Mammary epithelial cell (primary cell): ENCODE measurements at regions of chr17 and their contacts with region 1.

Region 1: GRCh38 chr17:44636562-44636961 is 19.7 kb upstream of the MEIOC start:
- DNase-seq: peak; percentile 12
- H3K4me3 ChIP-seq: no peak overlapping the region
- H3K27ac ChIP-seq: no peak overlapping the region
- H3K4me1 ChIP-seq: no peaks in the 10 kb centered on the region
- H3K27me3 ChIP-seq: no peaks in the 10 kb centered on the region
- CTCF ChIP-seq: peak; percentile 28 to 54

Region 2: DNA sequence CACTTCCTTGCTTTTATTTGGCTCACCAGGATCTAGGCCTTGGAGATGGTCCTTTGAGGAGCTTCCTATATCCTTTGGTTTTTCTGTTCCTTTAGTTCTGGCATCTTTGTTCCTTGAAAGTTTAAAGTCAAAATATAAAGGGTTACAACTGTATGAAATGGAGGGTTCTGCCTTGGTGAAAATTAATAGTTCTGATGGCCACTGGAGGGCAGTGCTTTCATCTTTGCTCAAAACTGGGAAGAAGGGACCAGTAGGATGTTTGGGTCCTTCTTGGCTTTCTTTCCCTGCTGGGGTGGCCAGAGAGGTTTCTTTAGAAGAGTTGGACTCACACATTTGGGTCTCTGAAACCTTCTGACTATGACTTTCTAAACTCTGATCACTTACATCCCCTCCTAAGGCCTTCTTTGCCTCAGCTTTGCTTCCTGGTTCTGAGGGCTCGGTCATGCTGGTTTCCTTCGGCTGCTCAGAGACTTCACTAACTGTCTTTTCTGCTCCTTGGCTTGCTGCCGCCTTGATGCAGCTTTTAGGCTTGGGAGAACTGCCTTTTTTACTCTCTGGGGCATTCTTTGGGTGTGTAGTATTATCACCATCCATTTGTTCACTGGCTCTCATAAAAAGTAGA is 236.2 kb before region 1 on chr17:
- CTCF ChIA-PET with region 1: no interaction called
- dilution Hi-C with region 1: no loop called
- in situ Hi-C with region 1: loop called in 1 of 2 experiments (anchors 25 kb)
- intact Hi-C with region 1: no loop called
- DNase-seq: no peak
- H3K4me3 ChIP-seq: no peak overlapping the region
- H3K27ac ChIP-seq: no peak overlapping the region
- H3K4me1 ChIP-seq: no peaks in the 10 kb centered on the region
- H3K27me3 ChIP-seq: no peaks in the 10 kb centered on the region
- CTCF ChIP-seq: peak; percentile 33 to 46

Region 3: DNA sequence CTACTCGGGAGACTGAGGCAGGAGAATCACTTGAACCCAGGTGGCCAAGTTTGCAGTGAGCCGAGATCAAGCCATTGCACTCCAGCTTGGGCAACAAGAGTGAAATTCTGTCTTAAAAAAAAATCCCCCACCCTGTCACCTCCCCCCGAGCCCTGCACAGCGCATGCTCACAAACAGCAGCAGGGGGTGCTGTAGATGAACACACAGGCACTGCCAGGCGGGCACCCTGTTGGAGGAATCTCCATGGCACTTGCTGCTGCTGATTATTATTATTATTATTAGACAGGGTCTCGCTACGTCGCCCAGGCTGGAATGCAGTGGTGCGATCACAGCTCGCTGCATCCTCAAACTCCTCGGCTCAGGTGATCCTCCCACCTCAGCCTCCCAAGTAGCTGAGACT is 54.7 kb before region 1 on chr17:
- CTCF ChIA-PET with region 1: no interaction called
- dilution Hi-C with region 1: no loop called
- in situ Hi-C with region 1: no loop called
- intact Hi-C with region 1: loop called (anchors 5 kb)
- DNase-seq: no peak
- H3K4me3 ChIP-seq: no peak overlapping the region
- H3K27ac ChIP-seq: no peak overlapping the region
- H3K4me1 ChIP-seq: no peaks in the 10 kb centered on the region
- H3K27me3 ChIP-seq: peaks cover 2% of the 10 kb centered on the region
- CTCF ChIP-seq: peak in 1 of 2 donors; percentile 7